AG04449 (cell line): ENCODE measurements at regions of chr11 and their contacts with region 1.

Region 1: GRCh38 chr11:35165423-35166368 is 26.7 kb downstream of the CD44 start:
- DNase-seq: no peak
- H3K4me3 ChIP-seq: no peak overlapping the region
- CTCF ChIP-seq: no peak

Region 2: DNA sequence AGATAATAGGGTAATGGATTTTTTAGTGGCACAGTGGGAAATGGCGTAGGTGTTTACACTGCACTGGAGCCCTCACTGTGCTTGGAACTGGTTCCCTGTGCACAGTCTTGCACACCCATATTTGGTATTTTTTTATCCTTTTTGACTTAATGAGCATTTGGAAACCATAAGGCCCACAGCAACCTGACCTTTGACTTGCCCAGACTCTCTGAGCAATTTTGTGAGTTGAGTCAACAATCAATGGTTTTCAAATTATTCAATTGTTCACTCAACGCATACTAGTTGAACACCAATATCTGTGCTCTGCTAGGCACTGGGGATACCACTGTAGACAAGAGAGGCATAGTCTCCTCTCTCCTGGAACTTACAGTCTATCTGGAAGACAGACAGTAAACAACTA is 12.4 kb before region 1 on chr11:
- CTCF ChIA-PET with region 1: interaction called, 11 read pairs
- POLR2A ChIA-PET with region 1: interaction called, 5 read pairs
- DNase-seq: no peak
- H3K4me3 ChIP-seq: no peak overlapping the region
- CTCF ChIP-seq: no peak

Region 3: DNA sequence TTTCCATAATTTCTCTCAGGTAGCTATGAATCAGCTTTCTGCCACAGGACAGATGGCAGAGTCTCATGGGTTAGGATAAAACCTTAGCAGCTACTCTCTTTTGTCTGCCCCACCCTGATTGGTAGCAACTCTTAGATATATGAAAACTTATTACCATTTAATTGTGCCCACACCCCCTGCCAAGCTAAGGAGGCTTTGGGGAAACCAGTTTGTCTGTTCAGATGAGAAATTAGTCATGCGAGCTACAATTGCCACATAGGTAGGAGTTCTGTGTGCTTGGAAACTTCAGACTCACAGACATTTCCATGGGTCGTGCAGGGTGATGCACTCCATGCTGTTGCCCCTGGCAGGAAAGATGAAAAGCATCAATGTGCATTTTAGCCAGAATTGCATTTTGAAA is 13.2 kb after region 1 on chr11:
- CTCF ChIA-PET with region 1: interaction called, 11 read pairs
- POLR2A ChIA-PET with region 1: interaction called, 3 read pairs
- DNase-seq: no peak
- H3K4me3 ChIP-seq: no peak overlapping the region
- CTCF ChIP-seq: no peak

Region 4: DNA sequence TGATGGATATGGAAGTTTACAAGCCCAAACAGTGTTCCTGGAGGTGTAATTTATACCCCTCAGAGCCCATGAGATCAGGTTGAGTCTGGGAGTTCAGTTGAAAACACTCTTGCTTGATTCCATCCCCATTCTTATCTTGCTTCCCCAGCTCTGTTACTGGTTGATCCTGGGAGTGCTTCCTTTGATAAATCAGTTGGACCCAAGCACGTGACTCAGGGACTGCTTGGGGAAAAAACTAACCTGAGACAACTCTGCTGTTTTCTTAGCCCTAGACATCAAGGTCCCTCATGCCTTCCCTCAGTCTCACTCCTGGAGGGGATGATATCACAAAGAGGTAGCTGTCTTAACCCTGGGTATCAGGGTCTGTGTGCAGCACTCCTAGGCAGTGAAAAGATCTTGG is 288.7 kb after region 1 on chr11:
- CTCF ChIA-PET with region 1: no interaction called
- POLR2A ChIA-PET with region 1: no interaction called
- DNase-seq: no peak
- H3K4me3 ChIP-seq: no peak overlapping the region
- CTCF ChIP-seq: no peak